GM13977 (cell line): ENCODE measurements at regions of chr6 and their contacts with region 1.

Region 1: DNA sequence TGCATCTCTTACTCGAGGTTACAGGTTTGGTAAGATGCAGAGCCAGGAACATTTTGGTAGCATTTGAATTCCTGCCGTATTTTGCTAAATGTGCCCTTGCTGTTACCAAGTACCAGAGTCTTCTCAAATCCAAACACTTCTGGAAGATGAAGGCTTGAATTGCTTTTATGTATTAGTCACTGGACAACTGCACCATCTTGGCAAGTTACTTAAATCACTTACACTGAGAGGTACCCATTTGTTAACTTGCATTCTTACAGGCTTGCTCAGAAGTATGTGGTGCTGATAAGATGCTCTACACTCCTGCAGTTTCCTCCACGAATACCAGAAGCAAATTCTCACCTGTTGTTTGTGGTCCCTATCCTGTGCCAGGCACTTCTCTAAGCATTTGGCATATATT is 12.7 kb downstream of the IL22RA2 start:
- DNase-seq: no peak
- CTCF ChIP-seq: no peak

Region 2: DNA sequence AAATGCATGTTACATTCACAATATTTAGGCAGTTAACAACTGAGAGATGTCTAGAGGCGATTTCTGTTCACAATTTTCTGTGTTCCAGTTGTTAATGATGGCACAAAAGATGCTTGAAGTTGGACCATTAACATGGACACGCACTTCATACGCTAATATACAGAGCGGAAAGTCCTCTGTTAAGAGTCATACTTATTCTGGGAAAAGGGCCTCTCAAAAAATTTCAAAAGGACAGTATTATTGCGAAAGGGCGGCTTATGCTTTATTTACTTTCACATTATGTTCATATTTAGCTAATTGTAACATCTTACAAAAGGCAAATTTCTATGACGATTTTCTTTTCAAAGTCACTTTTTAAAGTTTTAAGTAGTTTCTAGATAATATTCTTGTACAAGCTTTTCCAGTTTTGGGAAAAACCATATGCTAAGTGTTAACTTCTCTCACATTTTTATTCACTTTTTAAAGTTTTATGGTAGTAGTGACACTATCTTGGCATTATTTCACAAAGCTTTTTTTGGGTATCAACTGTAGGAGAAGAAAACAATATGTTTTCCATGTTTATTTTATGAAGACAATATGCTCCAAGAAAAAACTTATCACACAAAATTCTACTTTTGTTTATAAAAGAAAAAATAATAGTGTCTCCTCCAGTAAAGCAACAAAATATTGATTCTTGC is 672.9 kb before region 1 on chr6:
- in situ Hi-C with region 1: no loop called
- DNase-seq: no peak
- CTCF ChIP-seq: no peak

Region 3: DNA sequence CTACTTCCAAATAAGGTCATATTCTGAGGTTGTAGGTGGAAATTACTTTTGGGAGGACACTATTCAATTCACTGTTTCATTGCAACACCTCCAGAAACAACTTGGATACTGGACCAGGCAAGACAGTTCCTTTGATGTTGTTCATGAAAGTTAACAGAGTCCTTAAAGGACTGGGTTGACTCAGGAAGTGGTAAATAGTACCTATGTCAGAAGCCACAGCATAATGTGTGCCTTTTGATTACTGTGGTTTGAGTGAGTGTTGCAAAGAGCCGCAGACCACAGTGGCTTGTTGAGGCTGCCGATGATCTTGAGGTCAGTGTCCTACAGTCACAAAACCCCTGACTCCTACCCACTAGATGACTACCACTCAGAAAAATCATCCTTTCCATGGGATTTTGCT is 126.9 kb before region 1 on chr6:
- in situ Hi-C with region 1: no loop called
- DNase-seq: peak; percentile 58
- CTCF ChIP-seq: no peak

Region 4: DNA sequence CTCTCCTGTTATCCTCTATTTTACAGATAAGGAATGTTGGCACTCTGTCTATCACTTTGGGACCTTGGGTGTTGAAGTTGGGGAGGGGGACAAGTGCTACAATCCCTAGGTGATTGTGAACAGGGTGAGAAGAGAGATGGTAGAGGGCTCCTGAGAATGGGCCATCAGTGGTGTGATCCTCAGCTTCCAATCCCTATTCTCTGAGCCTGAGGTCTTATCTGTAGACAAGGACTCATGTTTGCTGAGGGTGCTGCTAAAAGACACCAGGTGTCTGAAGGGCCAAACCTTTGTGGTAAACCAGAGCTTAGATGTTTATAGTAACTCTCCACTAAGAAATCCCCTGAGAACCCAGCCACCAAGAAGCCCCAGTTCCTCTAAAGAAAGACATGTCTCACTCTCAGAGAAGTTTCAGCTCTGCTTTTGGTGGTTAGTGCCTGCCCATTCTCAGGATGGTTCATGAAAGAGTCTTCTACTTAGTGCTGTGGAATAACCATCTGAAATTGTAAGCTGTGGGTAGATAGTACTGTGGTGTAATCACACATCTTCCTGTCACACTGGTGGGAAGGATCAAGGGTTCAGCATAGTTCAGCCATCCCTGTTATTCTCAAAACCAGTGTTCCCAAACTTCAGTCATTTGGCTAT is 57.8 kb before region 1 on chr6:
- in situ Hi-C with region 1: loop called (anchors 5 kb)
- DNase-seq: peak; percentile 62
- CTCF ChIP-seq: peak; percentile 11